Calu3 (cell line): ENCODE measurements at regions of chr14 and their contacts with region 1.

Region 1: DNA sequence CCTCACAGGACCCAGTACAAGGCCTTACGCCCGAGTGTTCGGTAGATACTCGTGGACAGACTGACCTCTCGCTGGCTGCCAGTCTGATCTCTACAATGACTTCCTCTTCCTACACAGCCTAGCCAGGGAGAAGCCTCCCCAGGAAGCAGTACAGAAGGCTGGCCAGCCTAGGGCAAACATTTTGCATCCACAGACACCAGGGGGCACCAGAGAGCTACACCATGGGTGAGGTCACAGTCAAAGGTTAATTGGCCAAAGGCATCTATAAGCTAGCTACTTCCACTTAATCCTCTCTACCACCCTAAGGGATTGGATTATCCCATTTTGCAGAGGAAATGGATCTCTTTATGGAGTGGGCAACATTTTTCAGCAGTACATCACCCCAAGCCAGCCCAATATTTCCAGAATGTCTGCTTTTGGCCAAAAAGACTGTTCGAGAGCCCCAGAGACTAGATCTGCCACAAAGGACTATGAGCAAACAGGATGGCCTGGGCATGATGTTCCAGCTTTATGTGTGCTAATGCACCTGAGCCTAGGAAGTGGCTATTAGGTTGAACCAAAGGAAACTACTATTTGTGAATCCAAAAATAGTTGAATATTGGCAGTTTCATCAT is 14.6 kb upstream of the PNMA1 start:
- DNase-seq: peak; percentile 91
- H3K4me3 Mint-ChIP-seq: no peak overlapping the region
- H3K27ac Mint-ChIP-seq: peak overlapping the region; percentile 30
- H3K4me1 Mint-ChIP-seq: peaks cover 55% of the 10 kb centered on the region
- H3K27me3 Mint-ChIP-seq: no peaks in the 10 kb centered on the region
- CTCF ChIP-seq: peak; percentile 89

Region 2: DNA sequence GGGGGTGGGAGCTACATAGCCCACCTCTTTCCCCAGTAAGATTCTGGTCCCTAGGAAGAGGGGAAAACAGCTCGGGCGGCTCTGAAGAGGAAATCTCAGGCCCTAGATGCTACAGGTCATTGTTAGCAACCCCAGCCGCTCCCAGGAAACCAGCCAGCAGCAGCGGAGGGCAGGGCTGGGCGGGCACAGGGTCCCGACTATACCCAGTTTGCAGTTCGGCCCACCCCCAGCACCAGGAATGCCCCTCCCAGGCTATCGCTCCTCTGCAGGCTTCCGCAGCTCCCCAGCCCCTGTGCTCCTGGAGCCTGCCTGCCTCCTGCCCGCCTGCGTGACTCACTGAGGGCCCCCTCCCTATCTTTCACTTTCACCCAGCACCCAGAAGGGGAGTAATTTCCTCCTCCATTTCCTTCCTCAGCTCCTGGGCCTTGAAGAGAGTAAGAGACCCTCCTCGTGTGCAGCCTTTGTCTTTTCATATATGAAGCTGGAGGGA is 12.6 kb after region 1 on chr14:
- CTCF ChIA-PET with region 1: interaction called, 13 read pairs
- intact Hi-C with region 1: no loop called
- DNase-seq: peak; percentile 83
- H3K4me3 Mint-ChIP-seq: peak overlapping the region; percentile 57
- H3K27ac Mint-ChIP-seq: peak overlapping the region; percentile 94
- H3K4me1 Mint-ChIP-seq: peaks cover 42% of the 10 kb centered on the region
- H3K27me3 Mint-ChIP-seq: no peaks in the 10 kb centered on the region
- CTCF ChIP-seq: no peak

Region 3: DNA sequence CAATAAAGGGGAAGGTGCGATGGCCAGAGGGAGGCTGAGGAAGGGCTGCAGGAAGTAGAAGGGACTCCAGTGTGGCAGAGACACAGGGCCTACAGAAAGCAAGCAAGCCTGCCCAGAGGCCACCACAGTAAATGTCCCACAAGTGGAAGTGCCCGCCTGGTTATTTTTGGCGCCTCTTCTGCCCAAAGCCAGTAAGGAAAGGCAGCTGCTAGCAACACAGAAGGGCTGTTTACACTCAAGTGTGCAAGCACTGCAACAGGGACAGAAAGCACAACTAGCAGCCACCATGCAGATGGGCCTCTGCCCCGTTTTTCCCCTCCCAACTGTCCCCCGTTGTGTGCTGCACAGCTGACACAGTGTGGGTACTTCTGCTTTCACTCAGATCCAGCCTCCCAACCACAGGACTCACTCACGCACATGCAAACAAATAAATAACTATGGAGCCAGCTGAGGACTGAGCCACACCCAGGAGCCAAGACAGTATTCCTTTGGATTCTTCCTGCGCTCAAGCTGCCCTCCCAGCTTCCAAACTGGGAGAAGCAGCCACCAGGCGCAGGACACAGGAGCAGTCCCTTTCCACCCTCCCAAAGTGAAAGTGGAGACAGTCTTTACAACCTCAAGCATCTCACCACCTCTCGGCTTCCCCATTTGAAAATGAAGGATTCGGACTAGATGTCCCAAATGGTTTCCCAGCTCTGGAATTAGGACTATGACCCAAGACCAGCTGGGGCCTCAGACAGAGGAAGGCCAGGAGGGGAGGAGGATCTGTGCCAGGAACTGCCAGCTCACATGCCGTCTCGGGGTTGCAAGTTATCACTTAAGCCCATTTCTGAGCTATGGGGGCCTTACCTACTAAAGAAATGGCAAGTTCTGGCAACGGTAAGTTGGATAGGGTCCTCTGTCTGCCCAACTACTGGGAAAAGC is 25.4 kb after region 1 on chr14:
- CTCF ChIA-PET with region 1: interaction called, 26 read pairs
- intact Hi-C with region 1: loop called (anchors 1 kb)
- DNase-seq: no peak
- H3K4me3 Mint-ChIP-seq: peak overlapping the region; percentile 73
- H3K27ac Mint-ChIP-seq: peak overlapping the region; percentile 91
- H3K4me1 Mint-ChIP-seq: peaks cover 72% of the 10 kb centered on the region
- H3K27me3 Mint-ChIP-seq: no peaks in the 10 kb centered on the region
- CTCF ChIP-seq: no peak

Region 4: DNA sequence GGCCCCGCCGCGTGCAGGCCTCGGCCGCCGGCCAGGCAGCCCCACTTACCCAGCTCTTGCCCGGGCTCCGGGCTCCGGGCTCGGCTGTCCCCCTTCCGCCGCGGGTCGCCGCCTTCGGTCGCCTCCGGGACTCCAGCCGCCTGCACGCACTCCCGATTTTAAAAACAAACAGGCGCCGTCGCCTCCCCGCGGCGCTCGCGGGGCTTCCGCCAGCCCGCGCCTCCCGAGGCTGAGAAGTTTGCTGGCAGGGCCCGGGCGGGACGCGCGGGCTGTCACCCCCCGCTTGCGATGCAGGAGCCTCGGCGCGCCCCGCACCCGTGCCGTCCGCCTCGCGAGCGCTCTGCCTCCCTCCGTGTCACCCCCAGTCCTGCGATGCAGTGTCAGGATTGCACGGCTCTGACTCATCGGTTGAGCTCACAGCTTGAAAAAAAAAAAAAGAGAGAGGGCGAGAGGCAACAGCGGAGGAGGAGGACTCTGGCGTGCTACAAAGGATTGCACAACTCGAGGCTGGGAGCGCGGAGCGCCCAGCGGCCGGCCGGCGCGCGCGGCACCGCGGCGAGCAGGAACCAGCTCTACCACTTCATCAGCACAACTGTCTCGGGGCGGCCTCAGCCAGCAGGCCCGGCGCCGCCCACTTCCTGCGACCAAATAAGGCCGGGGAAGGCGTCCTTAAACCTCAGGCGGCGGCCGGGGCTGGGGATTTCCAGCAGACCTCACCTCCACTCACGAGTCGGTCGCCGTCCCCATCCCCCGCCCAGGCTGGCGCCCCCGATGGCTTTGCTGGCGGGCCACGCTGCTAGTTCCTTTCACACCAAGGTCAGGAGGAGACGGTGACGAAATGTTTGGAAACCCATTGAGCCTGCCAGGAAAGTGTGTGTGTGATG is 31.1 kb after region 1 on chr14:
- CTCF ChIA-PET with region 1: interaction called, 26 read pairs
- intact Hi-C with region 1: loop called (anchors 1 kb)
- DNase-seq: peak; percentile 97
- H3K4me3 Mint-ChIP-seq: peak overlapping the region; percentile 73
- H3K27ac Mint-ChIP-seq: peak overlapping the region; percentile 94
- H3K4me1 Mint-ChIP-seq: peaks cover 76% of the 10 kb centered on the region
- H3K27me3 Mint-ChIP-seq: no peaks in the 10 kb centered on the region
- CTCF ChIP-seq: no peak

Region 5: DNA sequence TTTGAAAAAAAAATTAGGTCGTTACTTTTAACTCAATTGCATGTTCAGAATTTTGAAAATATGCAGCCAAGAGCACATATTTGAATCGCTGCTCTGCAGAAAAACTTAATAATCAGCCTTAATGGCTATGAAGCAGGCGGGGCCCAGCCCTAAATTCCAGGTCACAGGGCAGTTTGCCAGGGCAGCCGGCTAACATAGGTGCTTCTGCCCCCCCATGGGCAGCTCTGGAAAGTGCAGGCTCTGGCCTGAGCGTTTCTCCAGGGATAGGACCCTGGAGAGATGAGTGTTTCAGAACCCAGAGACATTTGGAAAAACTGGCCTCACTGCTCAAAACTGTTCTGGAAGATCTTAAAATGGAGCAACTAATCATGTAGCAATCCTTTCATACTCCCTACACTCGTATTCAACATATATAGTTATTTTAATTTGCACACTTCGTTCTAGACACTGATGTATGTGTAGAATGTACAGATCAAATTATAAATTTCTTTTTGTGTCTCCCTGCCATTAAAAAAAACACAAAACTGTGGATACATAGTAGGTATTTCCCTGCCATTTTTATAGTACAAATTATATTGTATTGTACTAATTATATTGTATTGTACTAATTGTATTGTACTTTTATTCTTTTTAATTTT is 96.8 kb after region 1 on chr14:
- CTCF ChIA-PET with region 1: interaction called, 4 read pairs
- intact Hi-C with region 1: loop called (anchors 1 kb)
- DNase-seq: peak; percentile 89
- H3K4me3 Mint-ChIP-seq: no peak overlapping the region
- H3K27ac Mint-ChIP-seq: no peak overlapping the region
- H3K4me1 Mint-ChIP-seq: peaks cover 11% of the 10 kb centered on the region
- H3K27me3 Mint-ChIP-seq: no peaks in the 10 kb centered on the region
- CTCF ChIP-seq: peak; percentile 77